ENCODE measurements at regions of chr17 and their contacts with region 1.

Region 1: GRCh38 chr17:32006957-32007462 is at the start of gene LRRC37B:
- DNase-seq: peak; percentile 90
- ATAC-seq: peak; percentile 94
- H3K4me3 Mint-ChIP-seq: peak within 1 kb of the TSS; percentile 98
- H3K27ac Mint-ChIP-seq: peak within 1 kb of the TSS; percentile 96
- H3K4me1 Mint-ChIP-seq: peaks cover 37% of the 10 kb centered on the region
- H3K27me3 Mint-ChIP-seq: no peaks in the 10 kb centered on the region
- total RNA-seq, gene LRRC37B: 29.4 to 42.8 TPM

Region 2: GRCh38 chr17:31997005-31997404 is 10.0 kb before region 1 on chr17:
- CTCF ChIA-PET with region 1: interaction called, 11 read pairs
- DNase-seq: no peak
- ATAC-seq: no peak
- H3K4me3 Mint-ChIP-seq: no peak overlapping the region
- H3K27ac Mint-ChIP-seq: no peak overlapping the region
- H3K4me1 Mint-ChIP-seq: peaks cover 2% of the 10 kb centered on the region
- H3K27me3 Mint-ChIP-seq: no peaks in the 10 kb centered on the region

Region 3: DNA sequence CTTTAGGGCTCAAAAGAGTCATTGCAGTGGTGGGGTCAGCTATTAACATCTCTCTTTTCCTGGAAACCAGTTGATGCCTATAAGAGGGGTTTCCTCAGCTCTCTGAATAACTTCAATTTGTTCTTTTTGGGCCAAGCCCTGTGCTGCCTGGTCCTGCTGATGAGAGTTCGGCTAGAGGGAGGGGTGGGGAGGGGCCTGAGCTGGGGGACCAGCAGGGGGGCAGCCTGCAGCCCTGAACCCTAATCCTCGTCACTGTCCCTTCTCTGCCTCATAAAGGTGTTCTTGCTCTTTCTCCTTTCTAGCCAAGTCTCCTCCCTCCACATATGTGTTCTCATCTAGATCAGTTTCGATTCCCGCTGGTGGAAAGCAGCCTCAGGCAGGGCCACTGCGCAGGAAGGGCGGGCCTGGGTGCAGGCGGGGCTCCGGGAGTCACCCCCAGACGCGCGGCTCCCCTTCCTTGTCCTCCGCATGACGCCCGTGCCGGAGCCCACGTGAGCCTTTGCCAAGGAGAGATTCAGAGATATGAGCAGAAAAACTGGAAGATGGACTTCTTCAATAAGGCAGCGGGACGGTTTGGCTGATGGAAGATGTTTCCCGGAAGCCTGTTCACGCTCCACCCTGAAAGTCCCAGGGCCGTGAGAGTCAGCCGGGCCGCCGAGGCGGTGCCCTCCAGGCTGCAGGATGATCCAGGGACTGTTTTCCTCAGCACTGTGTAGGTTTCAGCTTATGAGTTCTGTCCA is 120.3 kb after region 1 on chr17:
- CTCF ChIA-PET with region 1: interaction called, 28 read pairs
- DNase-seq: peak; percentile 96
- ATAC-seq: peak; percentile 100
- H3K4me3 Mint-ChIP-seq: peak overlapping the region; percentile 93
- H3K27ac Mint-ChIP-seq: peak overlapping the region; percentile 96
- H3K4me1 Mint-ChIP-seq: peaks cover 33% of the 10 kb centered on the region
- H3K27me3 Mint-ChIP-seq: no peaks in the 10 kb centered on the region

Region 4: DNA sequence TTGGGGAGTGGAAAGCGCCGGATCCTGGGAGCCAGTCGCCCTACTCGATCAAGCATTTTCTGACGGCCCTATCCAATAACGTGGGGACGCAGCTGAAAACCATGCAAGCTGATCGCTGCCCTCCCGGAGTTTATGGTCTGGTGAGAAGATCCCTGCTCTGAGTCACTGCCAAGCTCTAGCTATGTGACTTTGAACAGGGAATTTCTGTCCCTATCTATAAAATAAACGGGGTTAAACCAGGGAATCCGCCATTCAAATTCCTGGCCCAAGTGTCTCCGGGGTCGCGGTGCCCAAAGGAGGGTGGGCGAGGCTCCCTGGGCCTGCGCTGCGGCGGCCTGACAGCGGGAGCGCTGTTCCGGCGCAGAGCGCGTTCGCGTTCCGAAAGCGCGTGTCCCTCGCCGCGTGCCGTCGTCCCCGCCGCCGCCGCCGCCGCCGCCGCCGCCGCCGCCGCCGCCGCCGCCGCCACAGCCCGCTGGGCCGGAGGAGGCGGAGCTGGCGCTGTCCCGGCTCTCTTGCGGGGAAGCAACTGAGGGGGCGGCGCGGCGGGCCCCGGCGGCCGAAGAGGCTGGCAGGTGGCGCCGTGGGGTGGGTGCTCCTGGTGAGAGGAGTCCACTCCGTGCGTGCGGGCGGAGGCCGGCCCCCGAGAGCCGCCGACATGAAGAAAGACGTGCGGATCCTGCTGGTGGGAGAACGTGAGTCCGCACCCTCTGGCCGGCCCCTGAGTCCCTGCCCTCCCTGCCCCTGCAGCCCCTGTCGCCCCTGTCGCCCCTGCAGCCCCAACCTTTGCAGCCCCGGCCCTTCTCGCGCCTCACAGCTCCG is 135.2 kb after region 1 on chr17 and contains the start of gene RHOT1:
- CTCF ChIA-PET with region 1: interaction called, 106 read pairs
- DNase-seq: peak; percentile 75
- ATAC-seq: peak; percentile 81
- H3K4me3 Mint-ChIP-seq: peak within 1 kb of the TSS; percentile 99
- H3K27ac Mint-ChIP-seq: peak within 1 kb of the TSS; percentile 86
- H3K4me1 Mint-ChIP-seq: peaks cover 27% of the 10 kb centered on the region
- H3K27me3 Mint-ChIP-seq: no peaks in the 10 kb centered on the region
- total RNA-seq, gene RHOT1: 25.7 to 28.2 TPM

Measured in activated CD8-positive, alpha-beta memory T cell treated with anti-CD3 and anti-CD28 coated beads, Interleukin-2, amount 10 ng/mL, durations not matched to agents 7 days and 5 days (primary cell).